Activated T-helper 2 cell treated with anti-CD3 and anti-CD28 coated beads, Interferon-gamma antibody, Interleukin-2, Interleukin-4, amounts not matched to agents 10 μg/mL and 5 μg/mL and 100 μg/mL, durations not matched to agents 14 hours and 24 hours and 36 hours (primary cell): ENCODE measurements at regions of chr9 and their contacts with region 1.

Region 1: DNA sequence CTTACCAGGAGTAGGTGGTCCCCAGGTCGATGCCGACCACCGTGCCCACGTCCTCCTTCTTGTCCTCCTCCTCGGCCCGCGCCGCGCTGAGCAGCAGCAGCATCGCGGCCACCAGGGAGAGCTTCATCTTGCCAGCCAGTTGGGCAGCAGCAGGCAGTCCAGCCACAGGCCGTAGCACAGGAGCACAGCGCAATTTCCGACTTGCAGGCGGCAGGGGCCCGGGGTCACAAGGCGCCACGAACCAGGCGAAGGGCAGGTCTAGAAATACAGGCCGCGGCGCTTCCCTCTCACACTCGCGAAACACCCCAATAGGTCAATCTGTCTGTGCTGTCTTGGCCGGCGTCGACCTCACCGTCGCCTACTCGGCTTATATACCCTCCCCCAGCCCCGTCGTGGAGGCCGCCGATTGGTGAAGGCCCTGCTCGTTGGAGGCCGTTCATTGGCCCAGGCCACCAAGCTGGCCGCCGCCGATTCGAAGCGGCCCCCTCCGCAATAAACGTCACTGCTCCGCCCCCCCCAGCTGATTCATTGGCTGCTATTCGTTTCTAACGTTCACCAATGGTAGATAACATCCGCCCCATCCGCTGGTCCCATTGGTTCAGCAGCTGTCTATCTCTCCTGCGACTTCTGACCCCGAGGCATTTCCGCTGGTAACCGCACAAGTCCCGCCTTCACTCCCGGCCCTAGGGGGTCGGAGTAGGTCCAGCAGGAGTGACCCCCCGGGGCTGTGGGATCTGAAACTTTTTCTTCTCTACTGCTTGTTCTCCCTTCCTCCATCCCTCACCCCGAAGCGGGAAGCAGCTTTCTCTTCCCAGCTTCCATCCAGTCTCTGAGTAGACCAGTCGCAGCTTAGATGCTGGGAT is at the start of gene HSPA5:
- DNase-seq: peak; percentile 99
- H3K4me3 Mint-ChIP-seq: peak within 1 kb of the TSS; percentile 100
- H3K27ac Mint-ChIP-seq: peak within 1 kb of the TSS; percentile 98
- H3K4me1 Mint-ChIP-seq: peaks cover 34% of the 10 kb centered on the region
- H3K27me3 Mint-ChIP-seq: no peaks in the 10 kb centered on the region
- total RNA-seq, gene HSPA5: 283 and 285 TPM in 2 replicates

Region 2: GRCh38 chr9:124480621-124480981 is 760.6 kb before region 1 on chr9:
- intact Hi-C with region 1: no loop called
- DNase-seq: no peak
- H3K4me3 Mint-ChIP-seq: no peak overlapping the region
- H3K27ac Mint-ChIP-seq: no peak overlapping the region
- H3K4me1 Mint-ChIP-seq: no peaks in the 10 kb centered on the region
- H3K27me3 Mint-ChIP-seq: peaks cover 8% of the 10 kb centered on the region

Region 3: DNA sequence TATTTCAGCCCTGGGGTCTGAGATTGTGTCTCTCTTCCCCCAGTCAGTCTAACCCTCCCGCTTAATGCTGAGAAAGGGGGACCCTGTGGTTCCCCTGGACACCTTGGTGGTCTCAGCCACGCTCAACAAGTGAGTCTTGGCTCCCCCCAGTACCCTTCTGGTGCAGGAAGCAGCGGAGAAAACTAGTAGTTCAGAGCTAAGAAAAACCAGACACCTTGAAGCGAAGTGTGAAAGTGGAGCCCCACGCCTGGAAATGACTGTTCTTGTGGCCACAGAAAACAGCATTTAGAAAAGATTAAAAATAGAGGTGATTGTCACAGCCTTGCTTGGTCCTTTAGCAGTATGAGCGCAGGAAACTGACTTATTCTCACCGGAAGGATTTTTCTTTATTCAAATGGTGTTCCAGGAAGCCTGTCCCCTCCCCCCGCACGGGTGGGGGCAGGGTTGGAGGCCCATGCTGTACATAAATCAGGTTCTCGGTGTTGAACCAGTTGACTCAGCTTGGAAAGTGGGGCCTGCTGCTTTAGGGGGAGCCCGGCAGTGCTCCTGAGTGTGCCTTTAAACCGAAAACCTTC is 371.2 kb before region 1 on chr9:
- intact Hi-C with region 1: loop called (anchors 2 kb)
- DNase-seq: peak; percentile 71
- H3K4me3 Mint-ChIP-seq: peak overlapping the region; percentile 99
- H3K27ac Mint-ChIP-seq: peak overlapping the region; percentile 98
- H3K4me1 Mint-ChIP-seq: peaks cover 39% of the 10 kb centered on the region
- H3K27me3 Mint-ChIP-seq: no peaks in the 10 kb centered on the region

Region 4: GRCh38 chr9:125189361-125190289 is 51.6 kb before region 1 on chr9 and contains the start of gene PPP6C:
- intact Hi-C with region 1: loop called (anchors 1 kb)
- DNase-seq: peak; percentile 96
- H3K4me3 Mint-ChIP-seq: peak within 1 kb of the TSS; percentile 94
- H3K27ac Mint-ChIP-seq: peak within 1 kb of the TSS; percentile 91
- H3K4me1 Mint-ChIP-seq: peaks cover 20% of the 10 kb centered on the region
- H3K27me3 Mint-ChIP-seq: no peaks in the 10 kb centered on the region
- total RNA-seq, gene PPP6C: 44.3 and 44.9 TPM in 2 replicates

Region 5: GRCh38 chr9:125200210-125201047 is 40.8 kb before region 1 on chr9 and contains the start of gene RABEPK:
- intact Hi-C with region 1: loop called (anchors 1 kb)
- DNase-seq: peak; percentile 88
- H3K4me3 Mint-ChIP-seq: peak within 1 kb of the TSS; percentile 91
- H3K27ac Mint-ChIP-seq: peak within 1 kb of the TSS; percentile 88
- H3K4me1 Mint-ChIP-seq: peaks cover 16% of the 10 kb centered on the region
- H3K27me3 Mint-ChIP-seq: peaks cover 5% of the 10 kb centered on the region
- total RNA-seq, gene RABEPK: 32.8 and 34.0 TPM in 2 replicates

Region 6: DNA sequence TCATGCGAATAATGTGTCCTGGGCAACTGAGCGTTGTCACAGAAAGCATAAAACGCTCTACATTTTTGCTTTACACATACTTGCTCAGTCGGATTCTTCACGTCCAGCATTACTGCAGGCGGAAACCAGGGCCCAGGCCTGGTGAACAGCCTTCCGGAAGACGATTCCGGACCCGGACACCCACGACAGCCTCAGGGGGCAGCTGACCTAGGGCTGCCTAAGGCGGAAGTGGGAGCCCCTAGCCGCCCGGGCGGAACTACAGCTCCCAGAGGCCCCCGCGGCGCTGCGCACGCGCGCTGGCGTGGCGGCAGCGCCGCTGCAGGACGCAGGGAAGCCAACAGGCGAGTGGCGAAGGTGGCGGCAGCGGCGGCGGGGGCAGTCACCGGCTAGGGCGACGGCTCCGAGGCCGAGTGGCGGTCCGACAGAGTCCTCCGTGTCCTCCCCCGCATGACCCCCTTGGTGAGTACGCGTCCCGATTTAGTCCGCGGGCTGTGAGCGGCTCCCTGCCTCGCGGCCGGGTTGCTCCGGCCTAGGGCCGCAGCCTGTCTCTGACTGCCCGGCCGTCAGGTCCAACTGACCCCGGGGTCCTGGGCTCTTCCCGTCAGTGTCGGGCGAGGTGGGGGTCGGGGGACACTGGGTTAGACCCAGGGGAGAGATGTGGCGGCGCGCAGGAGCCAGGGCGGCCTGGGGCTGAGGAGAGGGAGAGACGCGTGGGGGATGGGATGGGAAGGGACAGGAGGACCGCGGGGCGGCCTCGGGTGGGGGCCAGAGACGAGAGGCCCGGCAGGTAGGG is 20.5 kb after region 1 on chr9 and contains the start of gene GAPVD1:
- intact Hi-C with region 1: loop called (anchors 1 kb)
- DNase-seq: peak; percentile 86
- H3K4me3 Mint-ChIP-seq: peak within 1 kb of the TSS; percentile 98
- H3K27ac Mint-ChIP-seq: peak within 1 kb of the TSS; percentile 90
- H3K4me1 Mint-ChIP-seq: peaks cover 32% of the 10 kb centered on the region
- H3K27me3 Mint-ChIP-seq: peaks cover 2% of the 10 kb centered on the region
- total RNA-seq, gene GAPVD1: 50.8 and 51.0 TPM in 2 replicates

Region 7: DNA sequence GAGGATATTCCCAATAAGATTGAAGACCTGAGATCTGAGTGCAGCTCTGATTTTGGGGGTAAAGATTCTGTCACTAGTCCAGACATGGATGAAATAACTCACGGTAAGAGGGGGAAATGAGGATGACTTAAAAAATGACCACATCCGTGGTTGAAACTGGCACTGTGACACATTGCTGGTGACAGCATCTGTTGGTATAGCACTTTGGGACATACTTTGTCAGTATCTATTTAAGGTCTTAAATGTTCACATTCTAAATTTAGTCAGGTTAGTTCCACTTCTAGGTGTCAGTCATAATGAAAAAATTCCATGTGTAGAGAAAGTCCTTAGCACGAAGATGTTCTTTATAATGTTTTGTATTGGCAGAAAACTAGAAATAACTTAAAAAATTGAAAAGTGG is 91.3 kb after region 1 on chr9:
- intact Hi-C with region 1: loop called (anchors 5 kb)
- DNase-seq: no peak
- H3K4me3 Mint-ChIP-seq: no peak overlapping the region
- H3K27ac Mint-ChIP-seq: peak overlapping the region; percentile 19
- H3K4me1 Mint-ChIP-seq: peaks cover 13% of the 10 kb centered on the region
- H3K27me3 Mint-ChIP-seq: no peaks in the 10 kb centered on the region